ENCODE measurements at regions of chr15 and their contacts with region 1.

Region 1: GRCh38 chr15:92808978-92809879 is 90.9 kb upstream of the CHD2 start:
- DNase-seq: peak; percentile 99
- H3K4me3 Mint-ChIP-seq: peak overlapping the region; percentile 95
- H3K27ac Mint-ChIP-seq: peak overlapping the region; percentile 99
- H3K4me1 Mint-ChIP-seq: peaks cover 43% of the 10 kb centered on the region
- H3K27me3 Mint-ChIP-seq: no peaks in the 10 kb centered on the region

Region 2: GRCh38 chr15:92820236-92821021 is 11.2 kb after region 1 on chr15:
- CTCF ChIA-PET with region 1: interaction called, 14 read pairs
- POLR2A ChIA-PET with region 1: interaction called, 85 read pairs
- intact Hi-C with region 1: loop called (anchors 1 kb)
- DNase-seq: peak; percentile 92
- H3K4me3 Mint-ChIP-seq: peak overlapping the region; percentile 83
- H3K27ac Mint-ChIP-seq: peak overlapping the region; percentile 83
- H3K4me1 Mint-ChIP-seq: peaks cover 59% of the 10 kb centered on the region
- H3K27me3 Mint-ChIP-seq: no peaks in the 10 kb centered on the region

Region 3: GRCh38 chr15:92845126-92845508 is 35.9 kb after region 1 on chr15:
- CTCF ChIA-PET with region 1: interaction called, 4 read pairs
- POLR2A ChIA-PET with region 1: interaction called, 8 read pairs
- intact Hi-C with region 1: loop called (anchors 1 kb)
- DNase-seq: no peak
- H3K4me3 Mint-ChIP-seq: peak overlapping the region; percentile 57
- H3K27ac Mint-ChIP-seq: peak overlapping the region; percentile 89
- H3K4me1 Mint-ChIP-seq: peaks cover 70% of the 10 kb centered on the region
- H3K27me3 Mint-ChIP-seq: no peaks in the 10 kb centered on the region

Region 4: DNA sequence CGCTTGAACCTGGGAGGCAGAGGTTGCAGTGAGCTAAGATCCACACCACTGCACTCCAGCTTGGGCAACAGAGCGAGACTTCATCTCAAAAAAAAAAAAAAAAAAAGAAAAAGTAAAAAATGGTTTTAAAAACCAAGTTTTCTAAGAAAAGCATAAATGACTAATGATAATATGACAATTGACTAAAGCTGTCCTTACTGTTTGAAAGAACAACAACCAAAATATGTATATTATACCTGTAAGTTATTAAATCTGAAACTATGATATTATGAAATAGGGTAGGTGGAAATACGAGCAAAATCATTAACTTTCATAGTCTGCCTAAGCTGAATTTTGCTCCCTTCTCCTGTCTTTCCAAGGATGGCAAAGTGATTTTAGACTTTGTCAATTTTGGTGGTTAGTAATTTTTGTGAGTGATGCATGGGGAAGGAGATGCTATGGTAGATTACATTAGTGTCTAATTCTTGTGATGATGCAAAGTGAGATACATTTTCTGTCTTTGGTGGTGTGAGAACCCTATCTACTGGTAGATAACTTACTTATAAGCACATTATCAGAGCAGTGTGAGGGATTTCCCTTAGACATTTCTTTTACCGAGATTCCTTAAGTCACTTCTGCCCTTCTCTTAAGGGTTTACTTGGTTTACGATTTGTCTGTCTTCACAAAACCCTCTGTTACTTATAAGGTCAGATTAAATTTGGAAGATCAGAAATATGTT is 80.3 kb after region 1 on chr15:
- CTCF ChIA-PET with region 1: interaction called, 79 read pairs
- POLR2A ChIA-PET with region 1: interaction called, 295 read pairs
- intact Hi-C with region 1: no loop called
- DNase-seq: no peak
- H3K4me3 Mint-ChIP-seq: peak overlapping the region; percentile 61
- H3K27ac Mint-ChIP-seq: peak overlapping the region; percentile 86
- H3K4me1 Mint-ChIP-seq: peaks cover 66% of the 10 kb centered on the region
- H3K27me3 Mint-ChIP-seq: no peaks in the 10 kb centered on the region

Region 5: GRCh38 chr15:92903941-92904831 is 95.0 kb after region 1 on chr15:
- CTCF ChIA-PET with region 1: interaction called, 50 read pairs
- POLR2A ChIA-PET with region 1: interaction called, 240 read pairs
- intact Hi-C with region 1: loop called (anchors 1 kb)
- DNase-seq: peak; percentile 100
- H3K4me3 Mint-ChIP-seq: peak overlapping the region; percentile 97
- H3K27ac Mint-ChIP-seq: peak overlapping the region; percentile 100
- H3K4me1 Mint-ChIP-seq: peaks cover 55% of the 10 kb centered on the region
- H3K27me3 Mint-ChIP-seq: peaks cover 3% of the 10 kb centered on the region

Region 6: GRCh38 chr15:93129702-93130488 is 320.7 kb after region 1 on chr15:
- CTCF ChIA-PET with region 1: no interaction called
- POLR2A ChIA-PET with region 1: no interaction called
- intact Hi-C with region 1: no loop called
- DNase-seq: no peak
- H3K4me3 Mint-ChIP-seq: no peak overlapping the region
- H3K27ac Mint-ChIP-seq: no peak overlapping the region
- H3K4me1 Mint-ChIP-seq: no peaks in the 10 kb centered on the region
- H3K27me3 Mint-ChIP-seq: no peaks in the 10 kb centered on the region